ENCODE measurements at regions of chr4 and their contacts with region 1.

Region 1: GRCh38 chr4:54233277-54233696 is 4.2 kb downstream of the PDGFRA start:
- DNase-seq: no peak
- H3K4me3 ChIP-seq: peak overlapping the region; percentile 92
- H3K27me3 ChIP-seq: no peaks in the 10 kb centered on the region
- CTCF ChIP-seq: peak; percentile 80

Region 2: GRCh38 chr4:53189011-53189410 is 1044.3 kb before region 1 on chr4:
- CTCF ChIA-PET with region 1: interaction called, 30 read pairs
- POLR2A ChIA-PET with region 1: no interaction called
- DNase-seq: peak; percentile 52
- H3K4me3 ChIP-seq: no peak overlapping the region
- H3K27me3 ChIP-seq: no peaks in the 10 kb centered on the region
- CTCF ChIP-seq: no peak

Region 3: DNA sequence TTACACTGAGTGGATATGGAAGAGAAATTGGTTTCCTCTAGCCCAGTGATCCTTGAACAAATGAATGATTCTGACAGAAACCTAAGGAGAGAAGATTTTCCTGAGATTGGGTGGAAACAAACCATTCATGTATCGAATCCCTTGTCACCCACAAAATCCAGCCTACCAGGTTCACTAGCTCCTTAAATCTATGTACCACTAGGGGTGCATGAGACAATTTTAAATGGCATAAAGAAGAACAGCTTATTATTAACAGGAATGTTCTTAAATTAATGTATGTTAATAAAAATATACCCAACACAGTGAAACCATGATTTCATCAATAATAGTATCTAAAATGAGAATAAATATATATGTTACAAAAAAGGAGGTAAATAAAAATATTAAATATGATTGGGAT is 523.6 kb before region 1 on chr4:
- CTCF ChIA-PET with region 1: interaction called, 15 read pairs
- POLR2A ChIA-PET with region 1: no interaction called
- DNase-seq: no peak
- H3K4me3 ChIP-seq: no peak overlapping the region
- H3K27me3 ChIP-seq: no peaks in the 10 kb centered on the region; the same call in 1 of the 2 replicates
- CTCF ChIP-seq: no peak

Region 4: DNA sequence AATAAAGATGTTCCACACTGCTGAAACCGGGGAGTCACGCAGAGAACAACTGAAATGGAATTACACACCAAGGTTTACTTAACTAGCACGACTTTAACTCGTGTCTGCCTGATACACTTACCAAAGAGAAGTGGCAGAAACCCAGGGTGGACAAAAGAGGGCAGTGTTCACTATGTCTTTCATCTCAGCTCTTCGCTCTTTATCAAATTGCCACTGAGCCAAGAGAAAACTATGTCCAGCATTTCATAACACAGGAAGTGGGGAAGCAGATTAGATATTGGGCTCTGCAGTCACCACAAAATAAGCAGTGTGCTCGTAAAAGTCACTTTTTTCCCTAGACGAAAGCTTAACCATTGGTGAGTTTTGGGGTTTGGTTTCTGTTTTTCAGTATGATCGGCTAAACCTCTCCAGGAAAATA is 324.6 kb before region 1 on chr4:
- CTCF ChIA-PET with region 1: interaction called, 41 read pairs
- POLR2A ChIA-PET with region 1: no interaction called
- DNase-seq: peak; percentile 74
- H3K4me3 ChIP-seq: peak overlapping the region; percentile 20
- H3K27me3 ChIP-seq: no peaks in the 10 kb centered on the region; the same call in 1 of the 2 replicates
- CTCF ChIP-seq: peak; percentile 76

Region 5: DNA sequence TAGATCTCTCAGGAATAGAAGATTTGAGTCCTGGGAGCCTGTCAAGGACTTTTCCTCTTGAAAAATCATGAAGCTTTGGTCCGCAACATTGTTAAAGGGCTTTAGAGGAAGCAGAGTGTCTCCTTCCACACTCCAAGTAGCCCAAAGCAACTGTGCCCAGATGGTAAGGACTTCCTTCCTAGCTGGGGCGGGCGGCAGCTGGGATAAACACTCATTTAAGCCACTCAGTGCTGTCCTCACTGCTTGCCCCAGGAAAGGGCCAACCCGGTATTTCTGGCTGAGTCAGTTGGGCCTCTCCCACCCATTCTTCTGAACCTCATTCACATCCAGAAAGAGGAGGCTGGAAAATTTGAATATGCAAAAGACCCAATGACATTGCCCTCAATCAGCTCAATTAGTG is 313.2 kb before region 1 on chr4:
- CTCF ChIA-PET with region 1: interaction called, 21 read pairs
- POLR2A ChIA-PET with region 1: no interaction called
- DNase-seq: no peak
- H3K4me3 ChIP-seq: no peak overlapping the region
- H3K27me3 ChIP-seq: no peaks in the 10 kb centered on the region
- CTCF ChIP-seq: no peak

Region 6: DNA sequence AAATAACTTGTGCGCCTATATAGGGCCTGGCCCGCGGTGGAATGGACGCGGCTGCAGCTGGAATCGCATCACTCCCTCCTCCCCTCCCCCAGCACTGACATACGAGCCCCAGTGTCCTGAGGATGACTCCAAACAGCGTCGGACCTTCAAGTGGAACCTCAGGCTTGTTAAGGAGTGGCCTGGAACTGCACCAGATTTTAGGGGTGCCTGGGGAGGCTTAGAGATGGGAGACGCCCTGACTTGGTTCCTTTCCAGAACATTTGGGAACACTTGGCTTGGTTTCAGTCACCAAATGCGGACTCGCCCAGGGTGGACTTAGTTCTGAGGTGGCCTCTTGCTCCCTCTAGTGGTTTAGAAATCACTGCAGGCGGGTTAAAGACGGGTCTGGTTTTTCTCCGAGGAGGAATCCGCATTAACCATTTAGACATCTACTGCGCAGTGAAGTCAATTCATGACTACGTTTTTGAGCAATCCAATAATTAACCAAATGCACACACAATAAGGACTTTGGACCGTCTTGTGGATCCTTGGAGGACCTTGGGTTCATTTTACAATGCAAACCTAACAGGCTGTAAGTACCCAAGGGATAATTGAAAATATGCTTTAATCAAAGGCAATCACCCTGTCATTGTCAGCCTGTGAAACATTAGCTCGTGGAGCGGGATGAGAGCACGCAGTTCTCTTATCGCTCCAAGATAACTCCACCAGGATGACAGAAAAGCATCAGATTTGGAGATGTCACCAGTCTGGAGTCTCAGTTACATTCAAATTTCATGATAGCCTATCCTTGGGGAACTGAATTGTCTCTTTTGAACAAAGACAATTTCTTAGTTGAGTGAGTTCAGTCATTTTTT is 15.4 kb before region 1 on chr4:
- CTCF ChIA-PET with region 1: interaction called, 26 read pairs
- POLR2A ChIA-PET with region 1: interaction called, 15 read pairs
- DNase-seq: peak; percentile 72
- H3K4me3 ChIP-seq: peak overlapping the region; percentile 39
- H3K27me3 ChIP-seq: no peaks in the 10 kb centered on the region; the same call in 1 of the 2 replicates
- CTCF ChIP-seq: peak; percentile 87

Region 7: DNA sequence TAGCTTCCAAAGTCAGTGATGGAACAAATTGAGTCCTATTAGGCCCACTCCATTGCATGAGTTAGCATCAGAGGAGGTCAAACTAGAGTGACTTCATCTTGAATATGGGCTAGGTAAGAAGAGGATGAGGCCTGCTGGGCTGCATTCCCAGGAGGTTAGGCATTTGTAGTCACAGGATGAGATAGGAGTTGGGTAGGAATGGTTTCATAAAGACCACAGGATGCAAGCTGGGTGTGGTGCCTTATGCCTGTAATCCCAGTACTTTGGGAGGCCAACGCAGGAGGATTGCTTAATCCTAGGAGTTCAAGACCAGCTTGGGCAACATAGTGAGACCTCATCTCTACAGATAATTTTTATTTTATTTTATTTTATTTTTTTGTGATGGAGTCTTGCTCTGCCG is 22.6 kb after region 1 on chr4:
- CTCF ChIA-PET with region 1: no interaction called
- POLR2A ChIA-PET with region 1: no interaction called
- DNase-seq: no peak
- H3K4me3 ChIP-seq: no peak overlapping the region
- H3K27me3 ChIP-seq: no peaks in the 10 kb centered on the region
- CTCF ChIP-seq: no peak

Region 8: DNA sequence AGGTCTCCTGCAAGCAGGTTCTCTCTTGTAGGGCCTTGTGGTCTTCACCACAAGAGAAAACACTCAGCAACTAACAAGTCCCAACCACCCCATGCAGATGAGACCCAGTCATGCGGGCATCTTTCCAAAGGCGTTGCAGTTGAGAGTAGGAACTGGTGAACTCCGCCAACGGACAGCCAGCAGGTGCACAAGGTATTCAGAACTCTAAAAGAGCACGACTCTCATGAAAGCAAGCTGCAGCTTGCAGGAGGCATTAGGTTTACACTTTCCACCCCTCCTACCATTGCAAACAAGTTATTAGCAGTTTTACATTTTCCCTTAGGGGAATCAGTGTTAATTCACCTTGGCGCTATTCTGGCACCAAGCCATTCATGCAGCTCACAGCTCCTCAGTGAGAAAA is 251.1 kb after region 1 on chr4:
- CTCF ChIA-PET with region 1: no interaction called
- POLR2A ChIA-PET with region 1: no interaction called
- DNase-seq: no peak
- H3K4me3 ChIP-seq: no peak overlapping the region
- H3K27me3 ChIP-seq: no peaks in the 10 kb centered on the region; the same call in 1 of the 2 replicates
- CTCF ChIP-seq: no peak